Mammary epithelial cell (primary cell): ENCODE measurements at regions of chr1 and their contacts with region 1.

Region 1: DNA sequence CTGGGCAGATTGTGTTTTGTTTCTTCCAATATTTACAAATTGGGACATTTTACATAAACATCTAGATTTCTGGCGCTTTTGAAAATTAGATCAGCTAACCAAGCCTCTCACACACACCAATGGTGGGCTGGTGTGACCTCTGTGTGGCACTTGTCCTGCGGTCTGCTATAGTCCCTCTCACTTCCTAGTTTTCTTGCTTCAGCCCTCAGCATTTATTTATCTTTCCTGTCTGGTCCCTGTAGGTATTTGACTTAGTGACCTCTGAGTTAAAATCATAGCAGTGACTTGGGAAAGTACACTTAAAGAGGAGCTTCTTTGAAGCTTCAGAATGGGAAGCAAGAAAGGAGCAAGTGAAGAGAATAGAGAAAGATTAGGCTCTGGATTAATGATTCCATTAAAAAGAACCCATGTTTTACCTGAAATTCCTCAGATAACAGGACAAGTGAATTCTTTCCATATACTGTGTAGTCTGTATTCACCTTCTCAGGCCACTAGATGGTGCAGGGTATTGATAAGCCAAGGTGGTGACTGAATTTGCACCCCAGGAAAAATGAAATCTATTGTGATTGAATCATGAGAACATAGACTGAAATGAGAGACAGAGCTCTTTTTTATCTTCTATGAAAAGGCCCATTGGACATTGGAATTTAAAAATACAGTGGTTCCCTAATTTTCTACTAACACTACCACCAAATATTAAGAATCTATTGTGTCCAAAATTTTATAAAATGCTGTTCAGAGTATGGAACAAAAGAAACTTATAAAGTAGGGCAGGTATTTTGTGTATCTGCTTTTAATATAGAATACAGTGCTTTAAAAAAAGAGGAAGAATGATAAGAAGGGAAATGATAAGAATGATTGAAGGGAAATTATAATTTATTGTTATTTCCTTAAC is 7.1 kb upstream of the DIPK1A start:
- DNase-seq: peak; percentile 27
- H3K4me3 ChIP-seq: no peak overlapping the region
- H3K27ac ChIP-seq: no peak overlapping the region
- H3K4me1 ChIP-seq: peaks cover 10% of the 10 kb centered on the region
- H3K27me3 ChIP-seq: no peaks in the 10 kb centered on the region
- CTCF ChIP-seq: peak; percentile 76 to 80

Region 2: DNA sequence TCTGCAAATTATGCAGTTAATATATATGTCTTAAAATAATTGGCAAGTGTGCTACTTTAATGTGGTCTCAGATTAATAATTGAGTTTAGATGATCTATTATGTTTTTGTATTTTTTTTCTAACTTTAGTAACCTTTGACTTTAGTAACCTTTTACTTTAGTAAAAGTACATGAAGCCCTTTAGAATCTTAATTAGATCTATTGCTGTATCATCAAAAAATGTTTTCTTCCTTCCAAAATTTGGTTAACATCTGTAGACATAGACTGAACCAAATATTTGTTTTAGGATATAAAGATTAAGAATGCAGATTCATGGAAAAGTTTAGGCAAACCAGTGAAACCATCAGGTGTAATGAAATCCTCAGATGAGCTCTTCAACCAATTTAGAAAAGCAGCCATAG is 964.3 kb before region 1 on chr1:
- CTCF ChIA-PET with region 1: no interaction called
- dilution Hi-C with region 1: no loop called
- in situ Hi-C with region 1: no loop called
- intact Hi-C with region 1: no loop called
- DNase-seq: no peak
- H3K4me3 ChIP-seq: no peak overlapping the region
- H3K27ac ChIP-seq: no peak overlapping the region
- H3K4me1 ChIP-seq: no peaks in the 10 kb centered on the region
- H3K27me3 ChIP-seq: no peaks in the 10 kb centered on the region
- CTCF ChIP-seq: no peak

Region 3: DNA sequence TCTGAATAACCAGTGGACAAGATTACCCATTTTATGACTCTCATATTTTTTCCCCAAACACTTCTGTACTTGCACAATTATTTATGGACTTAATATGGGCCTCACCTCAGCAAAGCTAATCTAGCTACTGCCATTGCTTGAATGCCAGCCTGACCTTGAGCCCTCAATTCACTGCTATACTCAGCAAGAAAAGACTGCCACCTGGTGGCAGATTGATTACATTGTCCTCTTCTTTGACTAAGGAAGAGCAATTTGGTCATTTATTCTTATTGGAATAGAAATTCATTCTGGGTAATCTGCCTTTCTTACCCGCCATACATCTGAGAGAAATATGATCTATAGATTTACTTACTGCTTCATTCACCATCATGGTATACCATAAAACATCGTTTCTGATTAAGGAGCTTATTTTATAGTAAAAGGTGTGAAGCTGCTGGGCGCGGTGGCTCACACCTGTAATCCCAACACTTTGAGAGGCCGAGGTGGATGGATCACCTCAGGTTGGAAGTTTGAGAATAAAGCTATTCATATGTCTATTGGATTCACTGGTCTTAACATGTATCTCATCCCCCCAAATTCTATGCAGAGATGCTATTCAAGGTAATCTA is 25.8 kb after region 1 on chr1:
- CTCF ChIA-PET with region 1: no interaction called
- dilution Hi-C with region 1: no loop called
- in situ Hi-C with region 1: no loop called
- intact Hi-C with region 1: loop called (anchors 1 kb)
- DNase-seq: peak; percentile 50
- H3K4me3 ChIP-seq: no peak overlapping the region
- H3K27ac ChIP-seq: no peak overlapping the region
- H3K4me1 ChIP-seq: peaks cover 6% of the 10 kb centered on the region
- H3K27me3 ChIP-seq: no peaks in the 10 kb centered on the region
- CTCF ChIP-seq: peak; percentile 70 to 80